ENCODE measurements at regions of chr3 and their contacts with region 1.

Region 1: DNA sequence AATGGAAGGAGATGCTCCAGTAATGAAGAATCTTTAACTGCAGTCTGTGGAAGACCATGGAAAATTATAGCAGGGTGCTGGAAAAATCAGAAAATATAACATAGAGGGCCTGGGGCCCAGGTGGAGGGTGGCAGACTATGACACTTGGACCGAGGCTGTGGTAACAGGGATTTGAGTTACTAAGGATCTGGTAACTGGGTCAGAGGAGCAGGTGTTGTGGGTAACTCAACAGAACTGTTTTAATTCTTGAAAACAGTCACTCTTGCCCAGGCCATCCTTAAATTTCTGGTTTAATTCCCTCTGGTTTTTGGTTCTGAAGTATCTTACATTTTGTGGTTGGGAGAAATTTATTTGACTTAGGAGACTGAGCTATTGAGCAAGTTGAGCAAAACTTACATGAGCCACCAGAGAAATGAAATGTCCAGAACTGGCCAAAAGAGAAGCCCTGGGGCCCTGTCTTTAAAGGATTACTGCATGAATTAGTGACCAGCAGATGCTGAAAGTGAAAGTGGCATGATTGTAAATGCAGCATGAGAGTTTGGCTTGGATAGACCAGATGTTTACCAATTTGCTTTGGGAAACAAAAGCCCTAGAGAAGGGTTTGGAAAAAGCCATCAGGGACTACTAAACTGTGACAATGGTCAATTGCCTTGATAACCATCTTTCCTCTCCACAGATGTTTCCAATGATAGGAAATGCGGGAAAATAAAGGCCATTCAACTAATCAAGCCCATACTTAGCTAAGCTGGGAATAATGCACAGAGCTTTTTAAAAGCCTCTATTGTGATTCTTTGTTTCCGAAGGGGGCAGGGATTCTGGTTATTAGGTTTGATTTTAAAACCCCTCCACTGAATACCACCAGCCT is 374.9 kb upstream of the TGFBR2 start:
- DNase-seq: peak in 1 of 2 donors; percentile 83
- H3K4me3 ChIP-seq: no peak overlapping the region
- H3K27ac ChIP-seq: peak overlapping the region; percentile 59
- H3K4me1 ChIP-seq: peaks cover 29% of the 10 kb centered on the region
- H3K27me3 ChIP-seq: no peaks in the 10 kb centered on the region
- CTCF ChIP-seq: no peak
- POLR2A ChIP-seq: no peak

Region 2: DNA sequence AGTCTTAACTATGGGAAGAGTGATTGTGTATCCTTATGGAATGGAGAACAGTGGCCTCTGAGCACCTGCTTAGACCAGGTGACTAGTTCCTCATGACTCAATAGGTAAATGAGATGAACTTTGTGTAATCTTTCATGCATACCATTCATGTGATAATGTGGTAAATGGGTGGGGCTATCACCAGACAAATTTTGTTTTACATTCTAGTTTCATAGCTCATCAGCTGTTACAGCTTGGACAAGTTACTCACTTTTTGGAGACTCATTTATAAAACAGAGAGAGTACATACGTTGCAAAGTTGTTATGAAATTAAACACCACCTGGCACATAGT is 271.2 kb after region 1 on chr3:
- intact Hi-C with region 1: loop called (anchors 10 kb)
- DNase-seq: no peak
- H3K4me3 ChIP-seq: no peak overlapping the region
- H3K27ac ChIP-seq: no peak overlapping the region
- H3K4me1 ChIP-seq: peaks cover under 1% of the 10 kb centered on the region
- H3K27me3 ChIP-seq: no peaks in the 10 kb centered on the region
- CTCF ChIP-seq: no peak
- POLR2A ChIP-seq: no peak

Measured in vagina (tissue), 2 donors.